ENCODE measurements at regions of chr16 and their contacts with region 1.

Region 1: DNA sequence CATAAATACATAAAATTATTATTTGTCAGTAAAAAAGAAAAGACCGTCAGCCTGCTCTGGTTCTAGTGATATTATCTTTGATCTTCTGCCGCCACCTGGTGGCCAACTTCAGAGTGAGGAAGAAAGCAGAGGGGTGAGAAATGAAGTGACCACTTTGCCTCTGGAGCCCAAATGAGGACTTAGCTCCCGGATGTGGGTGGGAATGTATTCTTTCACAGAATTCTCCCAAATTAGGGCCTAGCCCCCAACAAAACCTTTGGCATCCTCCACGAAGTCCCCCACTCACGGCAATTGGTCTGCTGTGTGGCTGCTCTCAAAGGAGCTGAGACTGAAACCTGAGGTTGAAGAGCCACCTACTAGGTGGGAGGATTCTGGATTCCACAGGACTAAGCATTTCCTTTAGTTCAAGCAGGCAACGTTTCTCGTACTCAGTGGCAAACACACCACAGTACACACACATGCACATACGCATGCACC is 4.9 kb upstream of the ZNF267 start:
- DNase-seq: peak; percentile 77
- H3K4me3 ChIP-seq: no peak overlapping the region
- H3K27ac ChIP-seq: peak overlapping the region; percentile 56
- H3K4me1 ChIP-seq: peaks cover 24% of the 10 kb centered on the region
- H3K27me3 ChIP-seq: peaks cover 2 to 10% of the 10 kb centered on the region in 2 experiments
- CTCF ChIP-seq: peak; percentile 62 to 63
- POLR2A ChIP-seq: no peak

Region 2: GRCh38 chr16:30984669-30985400 is 883.9 kb before region 1 on chr16 and contains the start of gene HSD3B7:
- CTCF ChIA-PET with region 1: interaction called, 63 read pairs
- POLR2A ChIA-PET with region 1: no interaction called
- dilution Hi-C with region 1: no loop called
- intact Hi-C with region 1: loop called (anchors 1 kb)
- DNase-seq: peak; percentile 69
- H3K4me3 ChIP-seq: peak within 1 kb of the TSS in 1 of 3 experiments; percentile 19
- H3K27ac ChIP-seq: no peak within 1 kb of the TSS
- H3K4me1 ChIP-seq: no peaks in the 10 kb centered on the region
- H3K27me3 ChIP-seq: no peaks in the 10 kb centered on the region
- CTCF ChIP-seq: peak; percentile 93 to 97
- POLR2A ChIP-seq: no peak
- total RNA-seq, gene HSD3B7: 2.9 and 3.5 TPM in 2 replicates

Region 3: DNA sequence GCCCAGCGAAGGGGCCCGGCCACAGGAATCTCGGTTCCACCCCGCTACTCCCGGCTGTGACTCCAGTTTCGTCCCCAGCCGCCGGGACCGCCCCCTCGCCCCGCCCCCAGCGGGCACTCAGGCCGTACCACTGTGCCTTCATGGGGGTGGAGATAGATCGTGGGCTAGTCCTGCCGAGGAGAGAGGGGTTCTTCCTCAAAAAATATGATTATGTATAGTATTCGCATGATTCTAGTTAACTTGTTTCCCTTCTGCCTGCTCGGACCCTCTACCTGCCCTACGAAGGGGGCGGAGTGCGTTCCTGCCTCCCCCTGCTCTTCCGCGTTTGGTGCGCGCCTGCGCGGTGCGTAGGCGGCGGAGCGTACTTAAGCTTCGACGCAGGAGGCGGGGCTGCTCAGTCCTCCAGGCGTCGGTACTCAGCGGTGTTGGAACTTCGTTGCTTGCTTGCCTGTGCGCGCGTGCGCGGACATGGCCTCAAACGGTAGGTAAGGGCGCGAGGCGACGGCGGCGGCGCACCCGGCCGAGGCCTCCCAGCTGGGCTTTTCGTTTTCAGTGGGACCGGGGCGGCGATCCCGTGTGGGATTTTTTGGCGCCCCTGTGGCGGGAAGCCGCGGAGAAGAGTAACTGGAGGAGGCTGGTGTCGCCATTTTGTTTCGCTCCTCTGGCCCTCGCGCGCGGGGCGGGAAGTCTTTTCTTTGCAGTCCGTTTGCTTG is 688.8 kb before region 1 on chr16 and contains the start of gene FUS:
- CTCF ChIA-PET with region 1: no interaction called
- POLR2A ChIA-PET with region 1: interaction called, 8 read pairs
- dilution Hi-C with region 1: no loop called
- intact Hi-C with region 1: loop called (anchors 1 kb)
- DNase-seq: peak; percentile 90
- H3K4me3 ChIP-seq: peak within 1 kb of the TSS; percentile 77 to 100 (median 95)
- H3K27ac ChIP-seq: peak within 1 kb of the TSS; percentile 91
- H3K4me1 ChIP-seq: peaks cover 22% of the 10 kb centered on the region
- H3K27me3 ChIP-seq: no peaks in the 10 kb centered on the region
- CTCF ChIP-seq: no peak
- POLR2A ChIP-seq: peak; percentile 100
- total RNA-seq, gene FUS: 569 and 574 TPM in 2 replicates

Region 4: DNA sequence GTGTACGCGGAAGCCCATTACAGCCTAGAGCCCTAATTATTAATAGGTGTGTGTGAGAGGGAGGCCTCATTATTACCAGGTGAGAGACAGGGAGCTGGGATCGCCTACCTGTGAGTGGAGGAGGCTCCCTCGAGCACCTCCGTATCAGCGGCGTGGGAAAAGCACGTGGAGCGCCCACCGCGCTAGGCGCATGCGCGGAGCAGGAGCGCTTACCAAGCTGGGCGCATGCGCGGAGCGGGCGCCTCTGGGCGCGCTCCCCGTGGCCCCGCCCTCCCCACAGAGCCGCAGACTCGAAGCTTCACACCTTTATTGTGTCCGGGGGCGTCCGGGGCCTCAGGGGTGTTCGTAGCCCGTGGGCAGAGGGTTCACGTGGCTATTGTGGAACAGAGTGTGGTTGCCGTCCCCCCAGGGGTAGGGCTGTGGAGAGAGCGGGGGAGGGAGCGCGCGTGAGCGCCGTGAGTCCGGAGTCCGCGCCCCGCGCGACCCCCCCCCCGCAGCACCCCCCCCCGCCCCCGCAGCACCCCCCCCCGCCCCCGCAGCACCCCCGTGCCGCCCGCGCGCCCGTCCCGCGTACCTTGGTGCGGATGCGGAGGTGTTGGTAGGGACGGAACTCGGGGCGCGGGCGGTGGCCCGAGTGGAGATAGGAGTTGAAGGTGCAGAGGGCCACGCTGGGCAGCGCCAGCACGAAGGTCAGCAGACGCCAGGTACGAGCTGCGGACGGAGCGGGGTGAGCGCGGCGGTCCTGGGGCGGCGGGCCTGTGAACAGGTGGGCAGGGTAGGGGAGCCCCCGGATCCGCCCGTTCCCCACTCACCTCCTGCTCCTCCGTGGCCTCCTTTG is 441.1 kb before region 1 on chr16:
- CTCF ChIA-PET with region 1: no interaction called
- POLR2A ChIA-PET with region 1: no interaction called
- dilution Hi-C with region 1: no loop called
- intact Hi-C with region 1: no loop called
- DNase-seq: peak; percentile 8
- H3K4me3 ChIP-seq: no peak overlapping the region
- H3K27ac ChIP-seq: no peak overlapping the region
- H3K4me1 ChIP-seq: no peaks in the 10 kb centered on the region
- H3K27me3 ChIP-seq: peaks cover 4 to 6% of the 10 kb centered on the region in 2 experiments
- CTCF ChIP-seq: no peak
- POLR2A ChIP-seq: no peak

Region 5: DNA sequence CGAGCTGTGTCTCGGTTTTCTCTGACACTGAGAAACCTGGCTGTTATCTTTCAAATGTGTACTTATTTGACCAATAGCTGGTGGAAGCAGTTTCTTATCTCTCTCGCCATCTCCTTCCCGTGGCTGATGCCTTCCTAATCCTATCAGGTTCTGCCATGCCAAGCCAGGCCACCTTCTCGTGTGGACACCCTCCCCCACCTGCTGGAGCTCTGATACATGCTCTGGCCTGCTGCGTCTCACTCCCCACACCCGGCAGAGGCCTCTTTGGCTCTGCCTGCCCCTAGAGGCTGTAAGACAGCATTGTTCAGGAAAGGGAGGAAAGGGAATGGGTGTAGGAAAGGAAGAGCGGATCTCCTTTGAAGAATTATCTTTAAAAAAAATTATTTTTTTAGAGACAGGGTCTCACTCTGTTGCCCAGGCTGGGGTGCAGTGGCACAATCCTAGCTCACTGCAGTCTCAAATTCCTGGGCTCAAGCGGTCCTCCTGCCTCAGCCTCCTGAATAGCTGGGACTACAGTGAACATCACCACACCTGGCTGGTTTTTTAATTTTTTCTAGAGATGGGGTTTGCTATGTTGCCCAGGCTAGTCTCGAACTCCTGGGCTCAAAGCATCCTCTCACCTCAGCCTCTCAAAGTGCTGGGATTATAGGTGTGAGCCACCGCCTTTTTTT is 416.9 kb before region 1 on chr16:
- CTCF ChIA-PET with region 1: interaction called, 12 read pairs
- POLR2A ChIA-PET with region 1: no interaction called
- dilution Hi-C with region 1: no loop called
- intact Hi-C with region 1: no loop called
- DNase-seq: peak; percentile 56
- H3K4me3 ChIP-seq: no peak overlapping the region
- H3K27ac ChIP-seq: no peak overlapping the region
- H3K4me1 ChIP-seq: peaks cover 17% of the 10 kb centered on the region
- H3K27me3 ChIP-seq: no peaks in the 10 kb centered on the region
- CTCF ChIP-seq: peak; percentile 46 to 69
- POLR2A ChIP-seq: no peak

Region 6: GRCh38 chr16:31507929-31508705 is 360.6 kb before region 1 on chr16 and contains the start of gene RUSF1:
- CTCF ChIA-PET with region 1: no interaction called
- POLR2A ChIA-PET with region 1: no interaction called
- dilution Hi-C with region 1: no loop called
- intact Hi-C with region 1: loop called (anchors 10 kb)
- DNase-seq: peak; percentile 89
- H3K4me3 ChIP-seq: peak within 1 kb of the TSS; percentile 69 to 90 (median 77)
- H3K27ac ChIP-seq: peak within 1 kb of the TSS; percentile 82
- H3K4me1 ChIP-seq: peaks cover 27% of the 10 kb centered on the region
- H3K27me3 ChIP-seq: no peaks in the 10 kb centered on the region
- CTCF ChIP-seq: no peak
- POLR2A ChIP-seq: peak; percentile 91
- total RNA-seq, gene RUSF1: 36.4 and 36.8 TPM in 2 replicates